ENCODE measurements at regions of chr22 and their contacts with region 1.

Region 1: GRCh38 chr22:50498322-50498890 is 9.1 kb downstream of the LMF2 start:
- DNase-seq: peak; percentile 38
- ATAC-seq: peak; percentile 95
- H3K4me3 Mint-ChIP-seq: no peak overlapping the region
- H3K27ac Mint-ChIP-seq: no peak overlapping the region
- H3K4me1 Mint-ChIP-seq: peaks cover 3% of the 10 kb centered on the region
- H3K27me3 Mint-ChIP-seq: no peaks in the 10 kb centered on the region
- CTCF ChIP-seq: no peak

Region 2: GRCh38 chr22:50244420-50245213 is 253.8 kb before region 1 on chr22 and contains the start of gene TUBGCP6:
- CTCF ChIA-PET with region 1: interaction called, 10 read pairs
- POLR2A ChIA-PET with region 1: no interaction called
- intact Hi-C with region 1: loop called (anchors 1 kb)
- DNase-seq: peak; percentile 96
- ATAC-seq: peak; percentile 76
- H3K4me3 Mint-ChIP-seq: peak within 1 kb of the TSS; percentile 100
- H3K27ac Mint-ChIP-seq: peak within 1 kb of the TSS; percentile 100
- H3K4me1 Mint-ChIP-seq: peaks cover 52% of the 10 kb centered on the region
- H3K27me3 Mint-ChIP-seq: no peaks in the 10 kb centered on the region
- CTCF ChIP-seq: no peak
- total RNA-seq, gene TUBGCP6: 87.5 and 103 TPM in 2 replicates

Region 3: DNA sequence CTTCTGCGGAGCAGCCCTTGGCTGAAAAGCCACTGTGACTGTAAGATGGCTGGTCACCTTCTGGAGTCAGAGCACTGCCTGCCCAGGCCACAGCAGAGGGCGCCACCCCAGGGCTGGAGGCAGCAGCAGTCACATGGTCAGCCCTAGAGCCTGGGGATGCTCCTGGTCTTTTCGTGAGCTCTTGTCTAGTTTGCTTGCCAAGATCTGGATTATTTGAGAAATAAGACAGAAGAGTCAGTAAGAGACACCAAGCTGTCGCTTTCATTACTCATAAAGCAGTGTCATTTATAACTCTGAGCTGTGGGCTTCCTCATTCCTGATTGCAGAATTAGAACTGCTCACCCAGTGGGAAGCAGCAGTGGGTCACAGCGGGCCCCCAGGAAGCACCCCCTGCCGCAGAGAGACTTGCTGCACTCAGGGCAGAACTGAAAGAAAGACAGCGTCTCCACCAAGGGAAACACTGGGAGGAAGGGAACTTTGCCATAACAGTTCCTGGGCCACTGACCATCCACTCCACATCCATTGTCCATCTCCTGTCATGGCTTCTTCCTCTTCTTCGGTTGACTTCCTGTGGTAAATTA is 98.6 kb before region 1 on chr22:
- CTCF ChIA-PET with region 1: interaction called, 12 read pairs
- POLR2A ChIA-PET with region 1: interaction called, 3 read pairs
- intact Hi-C with region 1: loop called (anchors 5 kb)
- DNase-seq: no peak
- ATAC-seq: peak; percentile 69
- H3K4me3 Mint-ChIP-seq: peak overlapping the region; percentile 35
- H3K27ac Mint-ChIP-seq: peak overlapping the region; percentile 64
- H3K4me1 Mint-ChIP-seq: peaks cover 49% of the 10 kb centered on the region
- H3K27me3 Mint-ChIP-seq: no peaks in the 10 kb centered on the region
- CTCF ChIP-seq: no peak

Region 4: DNA sequence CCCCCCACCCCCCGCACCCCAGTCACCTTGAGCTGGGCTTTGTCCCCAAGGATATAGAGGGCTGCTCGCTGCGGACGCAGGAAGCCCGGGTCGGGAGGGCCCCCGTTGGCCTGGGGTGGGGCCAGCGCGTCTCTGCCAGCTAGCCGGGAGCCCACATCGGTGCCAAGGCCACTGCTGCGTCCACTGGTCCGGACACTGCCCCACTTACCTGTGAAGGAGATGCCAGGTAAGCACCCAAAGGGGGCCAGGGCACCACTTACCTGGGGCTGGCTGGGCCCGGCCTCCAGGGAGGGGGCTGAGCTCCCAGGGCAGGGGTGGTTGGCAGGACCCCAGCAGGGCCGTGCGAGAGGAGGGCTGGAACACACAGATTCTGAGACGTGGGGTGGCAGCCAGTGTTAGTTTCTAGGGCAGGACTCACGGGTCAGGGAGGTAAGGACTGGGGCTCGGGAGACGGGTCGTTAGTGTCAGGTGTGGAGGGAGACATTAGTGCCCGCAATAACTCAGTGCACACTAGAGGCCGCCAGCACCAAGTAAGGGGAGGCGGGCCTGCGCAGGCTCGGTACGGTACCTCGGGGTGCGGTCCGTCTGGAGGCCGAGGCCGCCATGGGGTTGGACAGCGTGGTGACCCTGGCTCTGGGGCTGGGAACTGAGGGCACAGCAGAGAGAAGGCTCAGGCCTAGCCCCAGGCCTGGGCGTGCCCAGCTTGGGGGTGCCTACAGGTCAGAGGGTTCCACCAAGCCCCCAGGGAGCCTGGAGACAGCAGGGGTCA is 41.8 kb before region 1 on chr22:
- CTCF ChIA-PET with region 1: interaction called, 9 read pairs
- POLR2A ChIA-PET with region 1: no interaction called
- intact Hi-C with region 1: loop called (anchors 5 kb)
- DNase-seq: no peak
- ATAC-seq: peak; percentile 45
- H3K4me3 Mint-ChIP-seq: no peak overlapping the region
- H3K27ac Mint-ChIP-seq: peak overlapping the region; percentile 64
- H3K4me1 Mint-ChIP-seq: no peaks in the 10 kb centered on the region
- H3K27me3 Mint-ChIP-seq: no peaks in the 10 kb centered on the region
- CTCF ChIP-seq: no peak

Region 5: DNA sequence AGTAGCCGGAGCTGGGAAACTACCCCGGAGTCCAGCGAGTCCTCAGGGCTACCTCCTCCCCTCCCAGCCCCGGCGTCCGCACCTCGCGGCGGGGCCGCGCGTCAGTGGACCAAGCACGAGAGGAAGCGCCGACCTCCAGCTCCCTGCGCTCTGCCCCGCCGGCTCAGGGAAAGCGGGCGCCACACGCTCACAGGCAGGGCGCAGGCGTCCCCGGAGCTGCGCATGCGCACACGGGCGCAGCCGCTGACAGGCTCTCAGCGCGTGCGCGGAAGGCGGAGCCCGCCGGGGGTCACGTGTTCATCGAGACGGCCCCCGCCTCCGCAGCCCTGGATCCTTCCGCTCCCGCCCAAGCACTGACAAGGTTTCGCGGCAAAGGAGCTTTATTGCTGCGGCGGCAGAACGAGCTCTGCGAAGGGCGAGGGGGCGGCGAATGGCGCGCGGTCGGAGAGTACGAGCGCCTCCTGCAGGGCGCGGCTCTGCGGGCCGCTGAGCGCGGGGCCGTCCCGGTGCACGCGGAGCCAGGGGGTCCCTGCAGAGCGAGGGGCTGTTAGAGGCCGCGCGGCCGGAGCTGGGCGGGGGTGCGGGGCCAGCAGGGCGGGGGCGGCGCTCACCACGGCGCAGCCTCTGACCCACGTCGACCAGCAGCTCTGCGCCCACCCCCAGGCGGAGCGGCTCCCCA is 27.1 kb after region 1 on chr22 and contains the start of gene SCO2:
- CTCF ChIA-PET with region 1: interaction called, 14 read pairs
- POLR2A ChIA-PET with region 1: interaction called, 6 read pairs
- intact Hi-C with region 1: no loop called
- DNase-seq: peak; percentile 97
- ATAC-seq: peak; percentile 52
- H3K4me3 Mint-ChIP-seq: peak within 1 kb of the TSS; percentile 84
- H3K27ac Mint-ChIP-seq: peak within 1 kb of the TSS; percentile 90
- H3K4me1 Mint-ChIP-seq: peaks cover 33% of the 10 kb centered on the region
- H3K27me3 Mint-ChIP-seq: no peaks in the 10 kb centered on the region
- CTCF ChIP-seq: no peak
- total RNA-seq, gene SCO2: 7.1 and 11.6 TPM in 2 replicates